HEK293 (cell line): ENCODE measurements at regions of chr11 and their contacts with region 1.

Region 1: DNA sequence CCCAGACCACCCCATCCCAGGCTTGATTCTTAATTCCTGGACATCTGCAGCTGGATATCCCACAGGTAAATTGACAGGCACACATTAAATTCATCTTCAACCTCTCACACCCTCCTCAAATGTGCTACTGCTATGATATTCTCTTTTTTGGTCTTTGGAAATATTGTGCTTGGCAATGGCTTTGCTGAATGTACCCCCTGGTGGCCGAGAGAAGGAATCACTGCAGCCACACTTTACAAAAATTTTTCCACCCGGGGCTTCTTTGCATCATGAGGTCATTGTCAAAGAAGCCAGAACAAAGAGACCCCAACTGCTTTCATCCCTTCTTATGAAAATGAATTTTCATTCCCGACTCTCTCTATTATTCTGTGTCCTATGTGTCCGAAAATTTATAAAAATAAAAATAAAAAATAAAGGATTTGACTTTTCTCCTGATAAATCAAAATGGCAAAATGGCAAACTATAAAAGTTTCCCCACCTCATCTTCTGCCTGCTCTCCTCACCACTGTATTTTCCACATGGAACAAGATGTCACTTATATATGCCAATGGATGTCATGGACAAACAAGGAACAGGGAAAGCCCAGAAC is 15.0 kb upstream of the CYB5R2 start:
- H3K4me3 ChIP-seq: no peak overlapping the region
- H3K27ac ChIP-seq: no peak overlapping the region
- H3K4me1 ChIP-seq: no peaks in the 10 kb centered on the region; the same call in none of the 2 replicates
- CTCF ChIP-seq: no peak

Region 2: GRCh38 chr11:7098235-7098832 is 590.0 kb before region 1 on chr11:
- CTCF ChIA-PET with region 1: interaction called, 36 read pairs
- POLR2A ChIA-PET with region 1: no interaction called
- H3K4me3 ChIP-seq: no peak overlapping the region
- H3K27ac ChIP-seq: no peak overlapping the region
- H3K4me1 ChIP-seq: no peaks in the 10 kb centered on the region
- CTCF ChIP-seq: no peak